Colonic mucosa (tissue), 4 donors: ENCODE measurements at regions of chr7 and their contacts with region 1.

Region 1: DNA sequence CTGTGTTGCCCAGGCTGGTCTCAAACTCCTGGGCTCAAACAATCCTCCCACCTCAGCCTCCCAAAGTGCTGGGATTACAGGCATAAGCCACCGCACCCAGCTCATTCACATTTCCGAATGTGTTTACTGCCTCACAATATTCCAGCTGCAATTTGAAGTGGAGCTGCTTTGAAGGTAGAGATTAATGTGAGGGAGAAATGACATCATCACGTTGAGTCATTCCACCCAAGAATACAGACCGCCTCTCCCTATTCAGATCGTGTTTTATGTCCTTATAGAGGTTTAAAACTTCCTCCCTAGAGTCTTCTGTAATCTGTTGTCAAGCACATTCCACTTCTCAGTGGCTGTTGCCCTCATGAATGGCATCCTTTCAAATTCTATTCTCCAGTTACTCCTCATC is 100.4 kb upstream of the PDGFA start:
- DNase-seq: peak; percentile 57
- H3K4me3 ChIP-seq: no peak overlapping the region
- H3K27ac ChIP-seq: peak overlapping the region; percentile 79
- H3K4me1 ChIP-seq: peaks cover 11% of the 10 kb centered on the region
- H3K27me3 ChIP-seq: no peaks in the 10 kb centered on the region
- CTCF ChIP-seq: no peak

Region 2: GRCh38 chr7:706721-707120 is 86.7 kb after region 1 on chr7:
- intact Hi-C with region 1: loop called (anchors 5 kb)
- DNase-seq: peak; percentile 72
- H3K4me3 ChIP-seq: no peak overlapping the region
- H3K27ac ChIP-seq: peak overlapping the region; percentile 15
- H3K4me1 ChIP-seq: peaks cover 7% of the 10 kb centered on the region
- H3K27me3 ChIP-seq: no peaks in the 10 kb centered on the region
- CTCF ChIP-seq: no peak

Region 3: DNA sequence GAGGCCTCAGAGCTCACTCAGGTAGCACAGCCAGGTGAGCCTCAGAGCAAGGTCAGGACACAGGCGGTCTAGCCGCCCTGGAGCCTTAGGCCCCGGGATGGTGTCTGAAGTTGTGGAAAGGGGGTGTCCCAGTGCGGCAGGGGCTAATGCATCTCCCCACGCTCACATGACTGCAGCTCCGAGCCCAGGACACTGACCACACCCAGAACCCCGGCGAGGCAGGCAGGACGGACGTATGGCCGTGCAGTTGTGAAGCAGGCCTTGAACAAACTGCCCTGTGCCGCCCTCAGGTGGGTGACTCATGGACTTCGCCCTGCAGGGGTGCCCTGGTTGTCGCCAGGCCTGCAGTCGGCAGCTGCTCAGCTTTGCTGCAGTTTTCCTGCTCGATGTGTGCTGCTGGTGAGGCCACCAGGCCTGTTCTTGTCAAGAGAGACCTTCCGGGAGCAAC is 112.1 kb after region 1 on chr7:
- intact Hi-C with region 1: no loop called
- DNase-seq: peak; percentile 86
- H3K4me3 ChIP-seq: no peak overlapping the region
- H3K27ac ChIP-seq: peak overlapping the region; percentile 29
- H3K4me1 ChIP-seq: peaks cover 4% of the 10 kb centered on the region
- H3K27me3 ChIP-seq: no peaks in the 10 kb centered on the region
- CTCF ChIP-seq: peak; percentile 27